ENCODE measurements at regions of chr22 and their contacts with region 1.

Region 1: GRCh38 chr22:21038405-21038804 is 6.0 kb upstream of the SLC7A4 start:
- DNase-seq: no peak
- H3K4me3 Mint-ChIP-seq: no peak overlapping the region
- H3K27ac Mint-ChIP-seq: peak overlapping the region; percentile 85
- H3K4me1 Mint-ChIP-seq: peaks cover 18% of the 10 kb centered on the region
- H3K27me3 Mint-ChIP-seq: no peaks in the 10 kb centered on the region
- CTCF ChIP-seq: no peak

Region 2: GRCh38 chr22:20829491-20830134 is 208.8 kb before region 1 on chr22:
- CTCF ChIA-PET with region 1: no interaction called
- POLR2A ChIA-PET with region 1: no interaction called
- intact Hi-C with region 1: no loop called
- DNase-seq: no peak
- H3K4me3 Mint-ChIP-seq: no peak overlapping the region
- H3K27ac Mint-ChIP-seq: no peak overlapping the region
- H3K4me1 Mint-ChIP-seq: no peaks in the 10 kb centered on the region
- H3K27me3 Mint-ChIP-seq: no peaks in the 10 kb centered on the region
- CTCF ChIP-seq: no peak

Region 3: GRCh38 chr22:20867179-20868024 is 171.0 kb before region 1 on chr22:
- CTCF ChIA-PET with region 1: no interaction called
- POLR2A ChIA-PET with region 1: no interaction called
- intact Hi-C with region 1: no loop called
- DNase-seq: no peak
- H3K4me3 Mint-ChIP-seq: no peak overlapping the region
- H3K27ac Mint-ChIP-seq: peak overlapping the region; percentile 27
- H3K4me1 Mint-ChIP-seq: peaks cover 9% of the 10 kb centered on the region
- H3K27me3 Mint-ChIP-seq: no peaks in the 10 kb centered on the region
- CTCF ChIP-seq: no peak

Region 4: GRCh38 chr22:20981787-20982562 is 56.4 kb before region 1 on chr22 and contains the start of gene LZTR1:
- CTCF ChIA-PET with region 1: no interaction called
- POLR2A ChIA-PET with region 1: interaction called, 10 read pairs
- intact Hi-C with region 1: no loop called
- DNase-seq: peak; percentile 79
- H3K4me3 Mint-ChIP-seq: peak within 1 kb of the TSS; percentile 88
- H3K27ac Mint-ChIP-seq: peak within 1 kb of the TSS; percentile 37
- H3K4me1 Mint-ChIP-seq: peaks cover 8% of the 10 kb centered on the region
- H3K27me3 Mint-ChIP-seq: no peaks in the 10 kb centered on the region
- CTCF ChIP-seq: peak; percentile 29
- total RNA-seq, gene LZTR1: 49.2 and 57.3 TPM in 2 replicates

Region 5: GRCh38 chr22:21014202-21014725 is 24.1 kb before region 1 on chr22:
- CTCF ChIA-PET with region 1: no interaction called
- POLR2A ChIA-PET with region 1: interaction called, 17 read pairs
- intact Hi-C with region 1: no loop called
- DNase-seq: peak; percentile 35
- H3K4me3 Mint-ChIP-seq: peak overlapping the region; percentile 80
- H3K27ac Mint-ChIP-seq: no peak overlapping the region
- H3K4me1 Mint-ChIP-seq: peaks cover 22% of the 10 kb centered on the region
- H3K27me3 Mint-ChIP-seq: no peaks in the 10 kb centered on the region
- CTCF ChIP-seq: no peak

Measured in MCF 10A (cell line).